ENCODE measurements at regions of chr2 and their contacts with region 1.

Region 1: GRCh38 chr2:174341286-174341994 is 6.7 kb downstream of the SP9 start:
- DNase-seq: peak in 1 of 2 donors; percentile 91
- H3K4me3 ChIP-seq: peak overlapping the region; percentile 5 to 18
- H3K27ac ChIP-seq: no peak overlapping the region
- H3K4me1 ChIP-seq: peaks cover 17 to 27% of the 10 kb centered on the region in 2 donors
- H3K27me3 ChIP-seq: peaks cover 62% of the 10 kb centered on the region
- CTCF ChIP-seq: peak; percentile 85 to 98 (median 97)

Region 2: GRCh38 chr2:172864182-172864581 is 1477.3 kb before region 1 on chr2:
- intact Hi-C with region 1: loop called (anchors 10 kb)
- DNase-seq: no peak
- H3K4me3 ChIP-seq: no peak overlapping the region
- H3K27ac ChIP-seq: no peak overlapping the region
- H3K4me1 ChIP-seq: no peaks in the 10 kb centered on the region
- H3K27me3 ChIP-seq: no peaks in the 10 kb centered on the region
- CTCF ChIP-seq: peak; percentile 42 to 66 (median 64)

Region 3: DNA sequence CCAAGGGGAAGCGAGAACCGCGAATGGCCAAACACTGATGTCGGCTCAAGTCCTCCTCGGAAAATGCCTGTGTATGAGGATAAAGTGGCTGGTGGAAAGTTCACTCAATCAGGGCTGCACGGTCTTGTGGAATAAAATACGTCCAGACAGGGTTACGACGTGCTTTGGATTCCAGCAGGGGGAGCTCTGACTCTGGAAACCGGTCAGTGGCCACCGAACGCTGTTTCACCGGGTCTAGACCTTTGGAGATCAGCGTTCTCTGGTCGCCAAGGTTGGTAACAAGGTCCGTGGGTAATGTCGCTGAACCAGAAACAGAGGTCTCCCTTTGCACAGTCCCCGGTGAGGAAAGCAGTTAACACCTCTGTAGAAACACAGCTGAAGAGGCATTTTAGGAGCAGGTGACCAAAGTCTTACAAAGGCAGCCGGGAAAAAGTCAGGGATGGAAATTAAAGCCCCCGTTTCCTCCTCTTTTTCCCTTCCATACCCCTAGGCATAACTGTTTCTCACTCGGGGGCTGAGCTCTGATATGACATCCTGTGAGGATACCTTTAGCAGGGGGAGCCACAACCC is 939.0 kb before region 1 on chr2:
- intact Hi-C with region 1: loop called (anchors 2 kb)
- DNase-seq: peak; percentile 24 to 85
- H3K4me3 ChIP-seq: peak overlapping the region in 1 of 2 donors; percentile 20
- H3K27ac ChIP-seq: no peak overlapping the region
- H3K4me1 ChIP-seq: peaks cover 0 to 6% of the 10 kb centered on the region in 2 donors
- H3K27me3 ChIP-seq: no peaks in the 10 kb centered on the region
- CTCF ChIP-seq: peak; percentile 81 to 85 (median 84)

Region 4: DNA sequence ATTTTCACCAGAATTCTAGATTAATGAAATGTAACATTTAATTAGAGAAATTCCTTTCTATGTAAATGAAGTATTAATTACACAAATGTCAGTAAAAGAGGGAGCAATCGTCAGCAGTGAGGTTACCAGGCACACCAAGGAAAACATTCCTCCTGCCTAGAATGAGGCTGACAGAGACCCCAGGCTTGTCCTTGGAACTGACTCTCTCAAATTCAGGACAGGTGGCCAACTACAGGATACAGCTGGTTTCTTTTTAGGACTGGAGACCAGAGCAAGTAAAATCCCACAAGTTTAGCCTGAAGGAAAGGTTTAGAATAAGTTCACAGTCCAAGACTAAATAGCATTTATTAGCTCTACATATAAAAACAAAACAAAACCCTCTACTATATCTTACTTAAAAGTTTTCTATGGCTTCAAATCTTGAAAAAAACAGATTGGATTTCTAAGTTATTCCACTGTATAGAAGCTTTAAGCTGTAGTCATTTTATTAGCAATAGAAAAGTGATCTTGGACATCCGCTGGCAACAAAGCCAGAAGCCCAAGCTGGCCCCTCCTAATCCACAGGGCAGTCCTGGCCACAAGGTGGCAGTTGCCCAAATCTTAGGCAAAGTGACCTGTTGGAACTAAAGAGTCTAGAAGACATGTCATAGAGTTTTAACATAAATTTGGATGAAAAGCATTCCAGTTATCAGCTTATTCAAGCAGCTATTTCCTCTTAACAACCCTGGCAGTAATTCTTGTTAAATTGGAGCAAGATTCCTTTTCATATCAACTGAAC is 457.2 kb before region 1 on chr2:
- intact Hi-C with region 1: loop called (anchors 10 kb)
- DNase-seq: no peak
- H3K4me3 ChIP-seq: no peak overlapping the region
- H3K27ac ChIP-seq: no peak overlapping the region
- H3K4me1 ChIP-seq: no peaks in the 10 kb centered on the region
- H3K27me3 ChIP-seq: no peaks in the 10 kb centered on the region
- CTCF ChIP-seq: peak; percentile 43 to 60 (median 48)

Region 5: GRCh38 chr2:174248187-174248997 is 93.0 kb before region 1 on chr2 and contains the start of gene OLA1:
- intact Hi-C with region 1: loop called (anchors 5 kb)
- DNase-seq: peak; percentile 75 to 96
- H3K4me3 ChIP-seq: peak within 1 kb of the TSS; percentile 77 to 91
- H3K27ac ChIP-seq: peak within 1 kb of the TSS; percentile 68 to 91
- H3K4me1 ChIP-seq: peaks cover 5 to 6% of the 10 kb centered on the region in 2 donors
- H3K27me3 ChIP-seq: no peaks in the 10 kb centered on the region
- CTCF ChIP-seq: peak in 1 of 3 experiments; percentile 3
- total RNA-seq, gene OLA1: 29.5 TPM

Region 6: DNA sequence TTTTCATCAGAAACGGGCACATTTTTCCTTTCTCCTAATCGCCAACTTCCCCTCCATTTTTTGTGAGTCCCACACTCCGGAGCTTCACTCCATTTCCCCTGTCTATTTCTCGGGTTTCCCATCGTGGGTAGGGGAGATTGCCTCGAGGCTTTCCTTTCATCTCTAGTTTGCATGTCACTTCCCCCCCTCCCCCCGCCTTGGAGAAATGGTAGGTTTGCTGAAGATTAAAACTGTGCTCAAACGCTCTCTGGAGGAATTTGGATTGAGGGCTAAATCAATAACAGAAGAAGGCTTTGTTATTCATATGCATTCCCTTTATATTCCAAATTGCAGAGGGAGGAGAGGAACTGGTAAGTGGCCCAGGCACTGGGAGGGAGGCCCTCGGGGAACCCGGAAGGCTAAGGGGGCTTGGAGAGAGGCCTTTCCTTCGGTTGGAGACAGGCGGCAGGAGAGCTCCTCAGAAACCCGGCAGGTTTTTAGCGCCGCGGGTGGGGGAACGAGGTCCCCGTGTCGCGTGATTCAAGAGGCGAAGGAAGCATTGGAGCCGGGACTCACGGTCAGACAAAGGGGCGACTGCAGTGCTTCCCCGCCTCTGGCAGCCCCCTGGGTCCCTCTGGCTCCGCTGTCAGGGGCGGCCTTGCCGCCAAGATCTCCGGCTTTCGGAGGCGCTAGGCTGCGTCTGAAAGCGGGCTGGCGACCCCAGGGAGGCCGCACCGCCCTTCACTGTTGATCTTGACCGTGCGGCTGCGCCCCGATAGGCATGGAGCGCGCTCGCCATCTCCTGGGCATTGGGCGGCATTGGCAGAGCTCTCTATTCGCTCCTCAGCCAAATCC is 1755.8 kb after region 1 on chr2:
- intact Hi-C with region 1: loop called (anchors 10 kb)
- DNase-seq: peak in 1 of 2 donors; percentile 77
- H3K4me3 ChIP-seq: peak overlapping the region; percentile 53 to 61
- H3K27ac ChIP-seq: no peak overlapping the region
- H3K4me1 ChIP-seq: peaks cover 18 to 19% of the 10 kb centered on the region in 2 donors
- H3K27me3 ChIP-seq: peaks cover 74% of the 10 kb centered on the region
- CTCF ChIP-seq: peak; percentile 66 to 78 (median 72)

Measured in ascending aorta (tissue), 2 donors.